Activated CD4-positive, alpha-beta T cell treated with anti-CD3 and anti-CD28 coated beads, Interleukin-2, amount 10 ng/mL, durations not matched to agents 7 days and 5 days (primary cell): ENCODE measurements at regions of chr3 and their contacts with region 1.

Region 1: DNA sequence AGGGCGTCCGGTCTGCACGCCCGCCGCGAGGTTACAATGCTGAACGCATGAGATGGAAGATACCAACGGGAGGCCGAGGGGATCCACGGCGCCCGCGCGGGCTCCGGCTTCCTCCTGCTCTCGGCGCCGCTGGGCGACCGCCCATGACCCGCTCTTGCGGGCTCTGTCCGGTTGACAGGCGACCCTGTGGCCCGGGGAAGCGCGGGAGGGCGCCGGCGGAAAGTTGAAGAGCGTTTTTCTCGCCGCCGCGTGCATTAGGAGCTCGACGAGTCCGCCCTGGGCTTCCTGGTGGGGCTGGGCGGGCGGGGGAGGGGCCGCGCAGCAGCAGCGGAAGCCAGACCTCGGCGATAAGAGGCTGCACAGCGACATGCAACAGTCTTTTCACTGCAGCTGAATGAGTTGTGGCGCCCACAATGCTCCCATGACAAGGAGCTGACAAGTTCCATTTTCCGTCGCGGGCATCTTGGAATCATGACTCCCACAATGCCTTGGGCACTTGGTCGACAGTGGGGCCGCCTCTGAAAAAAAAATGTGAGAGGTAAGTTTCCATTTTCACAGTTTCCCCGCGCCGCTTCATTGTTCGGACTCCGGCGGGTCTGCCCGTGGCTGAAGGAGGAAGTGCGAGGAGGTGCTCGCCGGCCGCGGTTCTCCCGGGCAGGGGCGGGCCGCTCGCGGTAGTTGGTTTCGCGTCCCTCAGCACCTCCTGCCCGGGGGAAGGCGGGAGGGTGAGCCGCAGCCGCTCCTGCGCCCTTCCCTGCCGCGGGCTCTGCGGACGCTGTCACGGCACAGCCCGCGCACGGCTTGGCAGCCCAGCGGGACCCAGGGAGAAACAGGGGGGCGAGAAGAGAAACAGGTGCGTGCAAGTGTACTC is at the start of gene MBNL1:
- DNase-seq: peak; percentile 89
- H3K4me3 Mint-ChIP-seq: peak within 1 kb of the TSS; percentile 91
- H3K27ac Mint-ChIP-seq: peak within 1 kb of the TSS; percentile 97
- H3K4me1 Mint-ChIP-seq: peaks cover 52% of the 10 kb centered on the region
- H3K27me3 Mint-ChIP-seq: no peaks in the 10 kb centered on the region
- total RNA-seq, gene MBNL1: 437 to 559 TPM

Region 2: GRCh38 chr3:152243721-152244516 is 24.9 kb before region 1 on chr3:
- CTCF ChIA-PET with region 1: interaction called, 8 read pairs
- POLR2A ChIA-PET with region 1: interaction called, 11 read pairs
- DNase-seq: peak; percentile 44
- H3K4me3 Mint-ChIP-seq: peak overlapping the region; percentile 99
- H3K27ac Mint-ChIP-seq: peak overlapping the region; percentile 84
- H3K4me1 Mint-ChIP-seq: peaks cover 47% of the 10 kb centered on the region
- H3K27me3 Mint-ChIP-seq: no peaks in the 10 kb centered on the region

Region 3: DNA sequence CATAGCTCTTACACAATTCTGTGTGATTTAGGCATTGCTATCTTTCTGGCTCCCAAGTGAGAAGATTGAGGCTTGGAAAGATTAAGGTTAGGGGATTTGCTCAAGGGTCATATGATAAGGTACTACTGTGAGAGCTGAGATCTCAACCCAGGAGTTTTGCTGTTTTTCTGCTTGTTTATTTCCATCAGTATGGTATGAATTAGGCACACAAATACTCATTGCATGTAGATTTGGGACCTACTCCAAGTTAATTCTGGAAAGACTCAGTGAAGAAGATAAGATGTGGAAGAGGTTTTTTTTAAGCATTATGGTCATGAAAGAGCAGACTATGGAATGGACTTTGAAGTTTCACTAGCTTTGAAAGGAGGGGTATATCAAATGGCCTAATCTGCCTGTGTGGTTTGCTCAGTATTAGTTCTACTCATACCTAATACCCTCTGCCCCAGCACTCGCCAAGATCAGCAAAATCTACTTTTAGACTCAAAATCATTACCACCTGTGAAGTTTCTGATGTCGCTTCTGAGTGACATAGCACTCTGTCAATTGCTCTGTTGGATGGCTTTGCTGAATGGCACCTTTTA is 12.4 kb after region 1 on chr3:
- CTCF ChIA-PET with region 1: interaction called, 11 read pairs
- POLR2A ChIA-PET with region 1: interaction called, 3 read pairs
- DNase-seq: no peak
- H3K4me3 Mint-ChIP-seq: no peak overlapping the region
- H3K27ac Mint-ChIP-seq: no peak overlapping the region
- H3K4me1 Mint-ChIP-seq: peaks cover 78% of the 10 kb centered on the region
- H3K27me3 Mint-ChIP-seq: no peaks in the 10 kb centered on the region